HCT116 (cell line): ENCODE measurements at regions of chr5 and their contacts with region 1.

Region 1: DNA sequence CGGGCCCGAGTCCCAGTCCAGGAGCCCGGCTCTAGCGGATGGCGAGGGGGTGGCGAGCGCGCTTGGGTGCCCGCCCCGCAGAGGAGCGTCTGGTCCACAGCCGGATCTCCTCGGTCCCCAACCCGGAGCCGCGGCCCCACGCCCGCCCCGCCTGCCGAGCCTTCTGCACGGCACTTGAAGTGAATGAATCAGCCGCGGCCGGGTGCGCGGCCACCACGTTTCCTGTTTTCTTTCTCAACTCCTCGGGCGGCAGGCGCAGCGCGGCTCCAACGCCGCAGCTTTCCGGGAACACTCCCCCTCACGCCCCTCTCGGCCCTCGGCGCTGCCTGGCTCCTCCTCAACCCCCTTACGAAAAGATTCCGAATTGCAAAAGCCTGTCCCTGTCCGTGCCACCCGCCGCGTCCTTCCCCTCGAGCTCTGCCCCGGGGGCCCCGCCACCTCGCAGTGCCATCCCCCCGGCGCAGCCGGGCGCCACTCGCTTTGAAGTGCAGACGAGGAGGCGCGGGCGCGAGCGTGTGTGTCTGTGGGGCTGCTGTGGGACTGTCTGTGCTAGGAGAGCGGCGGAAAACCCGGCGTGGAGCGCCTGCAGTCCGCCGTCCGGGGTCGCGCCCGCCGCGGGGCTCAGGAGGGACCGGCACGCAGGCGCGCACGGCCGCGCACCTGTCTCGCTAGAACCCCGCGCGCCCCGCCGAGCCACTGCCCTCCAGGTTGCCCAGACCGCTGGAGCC is 456.6 kb downstream of the RAB3C start:
- DNase-seq: no peak
- ATAC-seq: peak; percentile 73
- H3K4me3 ChIP-seq: peak overlapping the region; percentile 46 to 59
- H3K27ac ChIP-seq: no peak overlapping the region; the same call in 1 of the 2 replicates
- H3K4me1 ChIP-seq: peaks cover 2 to 20% of the 10 kb centered on the region in 2 experiments; a peak in 2 of 4 replicates
- H3K27me3 ChIP-seq: peaks cover 40% of the 10 kb centered on the region
- CTCF ChIP-seq: no peak
- POLR2A ChIP-seq: no peak
- RAD21 ChIP-seq: no peak

Region 2: GRCh38 chr5:59126708-59127573 is 87.5 kb after region 1 on chr5:
- CTCF ChIA-PET with region 1: interaction called, 4 read pairs
- POLR2A ChIA-PET with region 1: no interaction called
- RAD21 ChIA-PET with region 1: no interaction called
- intact Hi-C with region 1: loop called (anchors 1 kb)
- DNase-seq: no peak
- ATAC-seq: peak; percentile 64
- H3K4me3 ChIP-seq: peak overlapping the region; percentile 15 to 46; a peak in 3 of 4 replicates
- H3K27ac ChIP-seq: no peak overlapping the region
- H3K4me1 ChIP-seq: peaks cover 18 to 26% of the 10 kb centered on the region in 2 experiments
- H3K27me3 ChIP-seq: no peaks in the 10 kb centered on the region
- CTCF ChIP-seq: no peak
- POLR2A ChIP-seq: no peak
- RAD21 ChIP-seq: no peak

Region 3: GRCh38 chr5:59174248-59174844 is 134.9 kb after region 1 on chr5:
- CTCF ChIA-PET with region 1: interaction called, 14 read pairs
- POLR2A ChIA-PET with region 1: no interaction called
- RAD21 ChIA-PET with region 1: no interaction called
- intact Hi-C with region 1: loop called (anchors 1 kb)
- DNase-seq: peak; percentile 47
- ATAC-seq: peak; percentile 84
- H3K4me3 ChIP-seq: no peak overlapping the region
- H3K27ac ChIP-seq: no peak overlapping the region
- H3K4me1 ChIP-seq: no peaks in the 10 kb centered on the region
- H3K27me3 ChIP-seq: no peaks in the 10 kb centered on the region
- CTCF ChIP-seq: peak; percentile 56 to 87 (median 85); a peak in 5 of 6 replicates
- POLR2A ChIP-seq: no peak
- RAD21 ChIP-seq: peak; percentile 72

Region 4: DNA sequence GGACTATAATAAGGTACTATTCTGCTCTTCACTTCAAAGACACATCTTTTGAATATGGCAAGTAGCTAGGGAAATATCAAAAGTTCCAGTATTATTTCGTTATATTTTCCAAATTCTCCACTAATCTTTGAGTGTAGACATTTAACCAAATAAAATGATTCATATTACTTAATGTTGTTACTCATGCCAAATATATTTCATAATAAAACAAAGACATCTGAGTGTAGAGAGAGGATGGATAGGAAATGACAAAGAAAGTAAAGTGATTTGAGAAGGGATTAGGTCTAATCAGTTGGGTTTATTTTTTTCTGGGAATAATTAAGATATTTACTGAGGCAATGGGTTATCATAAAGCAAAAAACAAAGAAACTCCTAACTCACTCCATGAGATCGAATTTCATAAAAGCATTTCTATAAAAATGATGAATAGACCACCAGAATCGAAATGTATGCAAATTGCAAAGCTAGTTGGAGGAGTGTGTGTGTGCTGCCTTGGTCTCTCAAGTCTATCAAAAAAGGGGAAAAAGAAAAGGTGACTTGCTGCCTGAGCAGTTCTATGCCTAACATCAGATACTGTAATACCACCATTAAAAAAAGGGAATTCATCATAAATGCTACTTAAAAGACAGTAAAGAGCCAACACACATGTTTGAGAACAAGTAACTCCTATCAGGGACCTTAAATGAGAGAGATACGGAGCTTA is 598.6 kb after region 1 on chr5:
- CTCF ChIA-PET with region 1: no interaction called
- POLR2A ChIA-PET with region 1: no interaction called
- RAD21 ChIA-PET with region 1: no interaction called
- intact Hi-C with region 1: no loop called
- DNase-seq: no peak
- ATAC-seq: no peak
- H3K4me3 ChIP-seq: no peak overlapping the region
- H3K27ac ChIP-seq: no peak overlapping the region
- H3K4me1 ChIP-seq: no peaks in the 10 kb centered on the region
- H3K27me3 ChIP-seq: peaks cover 6% of the 10 kb centered on the region; the same call in 1 of the 2 replicates
- CTCF ChIP-seq: no peak
- POLR2A ChIP-seq: no peak
- RAD21 ChIP-seq: no peak